Naive thymus-derived CD4-positive, alpha-beta T cell (primary cell): ENCODE measurements at regions of chr2 and their contacts with region 1.

Region 1: GRCh38 chr2:177289824-177290628 is 25.5 kb upstream of the NFE2L2 start:
- DNase-seq: peak in 4 of 9 donors; percentile 23 to 30 (median 28)
- ATAC-seq: peak; percentile 46
- H3K4me3 ChIP-seq: peak overlapping the region; percentile 39
- H3K4me3 Mint-ChIP-seq: peak overlapping the region; percentile 49 to 86 (median 74)
- H3K27ac ChIP-seq: peak overlapping the region; percentile 52
- H3K27ac Mint-ChIP-seq: peak overlapping the region; percentile 78 to 97 (median 91)
- H3K4me1 ChIP-seq: peaks cover 4 to 19% of the 10 kb centered on the region in 2 donors
- H3K4me1 Mint-ChIP-seq: peaks cover 7 to 62% (median 33%) of the 10 kb centered on the region in 7 donors
- H3K27me3 ChIP-seq: no peaks in the 10 kb centered on the region
- H3K27me3 Mint-ChIP-seq: no peaks in the 10 kb centered on the region

Region 2: GRCh38 chr2:177306550-177306949 is 16.5 kb after region 1 on chr2:
- CTCF ChIA-PET with region 1: interaction called, 3 read pairs
- POLR2A ChIA-PET with region 1: interaction called, 12 read pairs
- intact Hi-C with region 1: loop called in 1 of 2 experiments (anchors 2 kb)
- DNase-seq: no peak
- ATAC-seq: no peak
- H3K4me3 ChIP-seq: no peak overlapping the region
- H3K4me3 Mint-ChIP-seq: no peak overlapping the region
- H3K27ac ChIP-seq: no peak overlapping the region
- H3K27ac Mint-ChIP-seq: peak overlapping the region in 4 of 9 donors; percentile 76 to 95 (median 89)
- H3K4me1 ChIP-seq: peaks cover 6 to 32% of the 10 kb centered on the region in 2 donors
- H3K4me1 Mint-ChIP-seq: peaks cover 15 to 55% (median 39%) of the 10 kb centered on the region in 7 donors
- H3K27me3 ChIP-seq: no peaks in the 10 kb centered on the region
- H3K27me3 Mint-ChIP-seq: no peaks in the 10 kb centered on the region